Transverse colon (tissue), 4 donors: ENCODE measurements at regions of chr17 and their contacts with region 1.

Region 1: DNA sequence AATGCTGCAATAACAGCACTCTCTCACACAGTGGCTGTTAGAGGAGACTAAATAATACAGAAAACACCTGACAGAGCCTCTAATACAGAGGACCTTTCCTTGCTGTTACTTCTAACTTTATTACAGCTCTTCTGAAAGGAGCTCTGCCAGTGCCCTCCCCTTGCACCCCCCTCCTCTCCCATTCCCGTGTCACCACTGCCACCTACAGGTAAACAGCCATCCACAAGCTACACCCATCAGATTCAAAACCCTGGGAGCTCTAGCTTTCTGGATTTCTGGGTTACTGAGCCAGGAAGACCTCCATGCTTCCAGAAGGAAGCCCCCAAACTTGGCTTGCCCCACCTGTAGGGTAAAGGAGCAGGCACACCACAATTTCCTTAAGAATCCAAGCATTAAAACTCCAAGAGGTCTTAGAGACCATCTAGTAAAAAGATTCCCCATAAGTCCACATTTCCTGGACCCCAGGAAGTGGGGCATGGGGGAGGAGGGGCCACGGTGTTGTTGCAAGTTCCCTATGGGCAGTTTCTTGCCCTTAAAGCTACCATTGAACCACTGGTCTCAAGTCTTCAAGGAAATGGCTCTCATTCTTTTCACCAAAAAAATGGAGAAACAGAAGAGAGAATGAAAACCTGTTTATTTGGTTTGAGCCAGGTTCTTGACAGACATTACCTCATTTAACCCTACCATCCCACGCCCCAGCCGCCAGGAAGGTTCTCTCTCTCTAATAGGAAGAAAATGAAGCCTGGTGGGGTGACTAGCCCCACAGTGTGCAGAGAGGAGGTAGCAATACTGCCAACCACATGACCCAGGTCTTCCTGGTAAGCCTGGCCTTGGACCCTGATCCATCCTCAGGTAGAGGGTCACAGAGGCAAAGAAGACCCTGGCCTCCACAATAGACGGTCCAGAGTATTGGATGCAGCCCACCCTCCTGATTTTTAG is 52.8 kb downstream of the TOM1L2 start:
- DNase-seq: peak; percentile 83
- H3K4me3 ChIP-seq: no peak overlapping the region
- H3K27ac ChIP-seq: peak overlapping the region; percentile 32 to 47 (median 42)
- H3K4me1 ChIP-seq: peaks cover 24 to 51% (median 44%) of the 10 kb centered on the region in 4 donors
- H3K27me3 ChIP-seq: no peaks in the 10 kb centered on the region
- CTCF ChIP-seq: peak; percentile 68 to 80 (median 74)
- EP300 ChIP-seq: no peak
- POLR2A ChIP-seq: no peak

Region 2: GRCh38 chr17:17812211-17813057 is 107.0 kb before region 1 on chr17:
- in situ Hi-C with region 1: no loop called
- intact Hi-C with region 1: loop called (anchors 10 kb)
- DNase-seq: peak; percentile 74
- H3K4me3 ChIP-seq: no peak overlapping the region
- H3K27ac ChIP-seq: peak overlapping the region; percentile 34 to 60 (median 46)
- H3K4me1 ChIP-seq: peaks cover 3 to 29% (median 17%) of the 10 kb centered on the region in 4 donors
- H3K27me3 ChIP-seq: no peaks in the 10 kb centered on the region
- CTCF ChIP-seq: peak; percentile 99 to 100 (median 100)
- EP300 ChIP-seq: no peak
- POLR2A ChIP-seq: no peak